PC-9 (cell line): ENCODE measurements at regions of chrX and their contacts with region 1.

Region 1: GRCh38 chrX:1239681-1240142 is 27.3 kb upstream of the CRLF2 start:
- DNase-seq: no peak
- H3K4me3 ChIP-seq: no peak overlapping the region
- H3K27ac ChIP-seq: no peak overlapping the region
- H3K4me1 ChIP-seq: peaks cover 11% of the 10 kb centered on the region
- H3K27me3 ChIP-seq: no peaks in the 10 kb centered on the region
- CTCF ChIP-seq: no peak

Region 2: GRCh38 chrX:997631-998137 is 242.0 kb before region 1 on chrX:
- CTCF ChIA-PET with region 1: no interaction called
- POLR2A ChIA-PET with region 1: no interaction called
- intact Hi-C with region 1: no loop called
- DNase-seq: no peak
- H3K4me3 ChIP-seq: no peak overlapping the region
- H3K27ac ChIP-seq: no peak overlapping the region
- H3K4me1 ChIP-seq: no peaks in the 10 kb centered on the region
- H3K27me3 ChIP-seq: peaks cover 32% of the 10 kb centered on the region
- CTCF ChIP-seq: no peak

Region 3: DNA sequence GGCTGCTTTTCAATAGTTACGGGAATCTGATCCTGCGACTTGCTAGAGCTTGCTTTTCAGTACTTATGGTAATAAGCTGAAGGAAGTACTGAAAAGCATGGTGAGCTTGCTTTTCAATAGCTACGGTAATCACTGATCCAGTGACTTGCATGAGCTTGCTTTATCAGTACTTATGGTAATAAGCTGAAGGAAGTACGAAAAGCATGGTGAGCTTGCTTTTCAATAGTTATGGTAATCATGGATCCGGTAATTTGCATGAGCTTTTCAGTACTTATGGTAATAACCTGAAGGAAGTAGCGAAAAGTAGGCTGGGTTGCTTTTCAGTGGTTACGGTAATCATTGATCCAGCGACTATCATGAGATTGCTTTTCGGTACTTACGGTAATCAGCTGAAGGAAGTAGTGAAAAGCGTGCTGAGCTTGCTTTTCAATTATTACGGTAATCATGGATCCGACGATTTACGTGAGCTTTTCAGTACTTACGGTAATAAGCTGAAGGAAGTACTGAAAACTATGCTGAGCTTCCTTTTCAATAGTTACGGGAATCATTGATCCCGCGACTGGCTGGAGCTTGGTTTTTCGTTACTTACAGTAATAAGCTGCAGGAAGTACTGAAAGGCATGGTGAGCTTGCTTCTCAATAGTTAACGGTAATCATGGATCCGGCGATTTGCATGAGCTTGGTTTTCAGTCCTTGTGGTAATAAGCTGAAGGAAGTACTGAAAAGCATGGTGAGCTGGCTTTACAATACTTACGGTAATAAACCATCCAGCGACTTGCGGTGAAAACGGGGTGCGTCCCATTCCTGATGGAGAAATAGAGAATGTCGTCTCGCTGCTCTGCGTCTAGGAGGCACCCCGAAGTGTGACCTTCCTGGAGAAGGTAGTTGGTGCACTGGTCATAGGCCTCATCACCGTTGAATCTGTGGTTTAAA is 33.8 kb before region 1 on chrX:
- CTCF ChIA-PET with region 1: no interaction called
- POLR2A ChIA-PET with region 1: no interaction called
- intact Hi-C with region 1: loop called (anchors 1 kb)
- DNase-seq: peak; percentile 47 to 93
- H3K4me3 ChIP-seq: peak overlapping the region; percentile 42; the same call in 1 of the 2 replicates
- H3K27ac ChIP-seq: peak overlapping the region; percentile 35; the same call in 1 of the 2 replicates
- H3K4me1 ChIP-seq: peaks cover 29% of the 10 kb centered on the region
- H3K27me3 ChIP-seq: no peaks in the 10 kb centered on the region
- CTCF ChIP-seq: no peak

Region 4: GRCh38 chrX:1274786-1275185 is 35.1 kb after region 1 on chrX:
- CTCF ChIA-PET with region 1: no interaction called
- POLR2A ChIA-PET with region 1: no interaction called
- intact Hi-C with region 1: no loop called
- DNase-seq: no peak
- H3K4me3 ChIP-seq: no peak overlapping the region
- H3K27ac ChIP-seq: no peak overlapping the region
- H3K4me1 ChIP-seq: no peaks in the 10 kb centered on the region
- H3K27me3 ChIP-seq: no peaks in the 10 kb centered on the region
- CTCF ChIP-seq: no peak

Region 5: GRCh38 chrX:1580735-1581531 is 341.2 kb after region 1 on chrX:
- CTCF ChIA-PET with region 1: no interaction called
- POLR2A ChIA-PET with region 1: no interaction called
- intact Hi-C with region 1: loop called (anchors 5 kb)
- DNase-seq: no peak
- H3K4me3 ChIP-seq: no peak overlapping the region
- H3K27ac ChIP-seq: no peak overlapping the region
- H3K4me1 ChIP-seq: 0 out of 2 replicates have a peak, but pooled peaks cover 8% of the 10 kb centered on the region
- H3K27me3 ChIP-seq: no peaks in the 10 kb centered on the region
- CTCF ChIP-seq: peak; percentile 81